CD4-positive, alpha-beta memory T cell (primary cell): ENCODE measurements at regions of chr14 and their contacts with region 1.

Region 1: GRCh38 chr14:66495218-66496098 is 9.3 kb downstream of the CCDC196 start:
- DNase-seq: peak; percentile 31 to 41 (median 39)
- H3K4me3 ChIP-seq: no peak overlapping the region
- H3K4me3 Mint-ChIP-seq: peak overlapping the region in 1 of 8 donors; percentile 12
- H3K27ac ChIP-seq: no peak overlapping the region
- H3K27ac Mint-ChIP-seq: no peak overlapping the region
- H3K4me1 ChIP-seq: peaks cover 3% of the 10 kb centered on the region
- H3K4me1 Mint-ChIP-seq: peaks cover 0 to 11% (median 9%) of the 10 kb centered on the region in 4 donors
- H3K27me3 ChIP-seq: no peaks in the 10 kb centered on the region
- H3K27me3 Mint-ChIP-seq: no peaks in the 10 kb centered on the region

Region 2: DNA sequence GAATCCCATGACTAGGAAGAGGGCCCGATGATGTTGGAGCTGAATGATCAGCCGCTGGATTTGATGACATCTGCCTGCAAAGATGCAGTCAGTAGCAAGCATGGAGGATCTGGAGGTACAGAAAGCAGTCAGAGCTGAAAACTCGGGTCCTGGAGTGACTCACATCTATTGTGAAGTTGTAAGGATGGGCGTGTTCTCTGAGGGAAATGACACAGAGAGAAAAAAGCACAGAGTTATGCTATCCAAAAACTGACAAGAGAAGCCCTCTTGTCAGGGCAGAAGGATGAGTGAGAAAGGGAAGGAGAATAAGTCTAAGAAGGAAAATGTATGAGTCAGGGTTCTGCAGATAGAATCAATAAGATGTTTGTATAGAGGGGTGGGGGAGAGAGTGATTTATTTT is 389.6 kb before region 1 on chr14:
- CTCF ChIA-PET with region 1: no interaction called
- POLR2A ChIA-PET with region 1: no interaction called
- intact Hi-C with region 1: no loop called
- DNase-seq: no peak
- H3K4me3 ChIP-seq: no peak overlapping the region
- H3K4me3 Mint-ChIP-seq: no peak overlapping the region
- H3K27ac ChIP-seq: no peak overlapping the region
- H3K27ac Mint-ChIP-seq: peak overlapping the region in 2 of 7 donors; percentile 4 to 10
- H3K4me1 ChIP-seq: no peaks in the 10 kb centered on the region
- H3K4me1 Mint-ChIP-seq: peaks cover 0 to 4% (median under 1%) of the 10 kb centered on the region in 4 donors
- H3K27me3 ChIP-seq: no peaks in the 10 kb centered on the region
- H3K27me3 Mint-ChIP-seq: peaks cover 0 to 1% of the 10 kb centered on the region in 2 donors

Region 3: DNA sequence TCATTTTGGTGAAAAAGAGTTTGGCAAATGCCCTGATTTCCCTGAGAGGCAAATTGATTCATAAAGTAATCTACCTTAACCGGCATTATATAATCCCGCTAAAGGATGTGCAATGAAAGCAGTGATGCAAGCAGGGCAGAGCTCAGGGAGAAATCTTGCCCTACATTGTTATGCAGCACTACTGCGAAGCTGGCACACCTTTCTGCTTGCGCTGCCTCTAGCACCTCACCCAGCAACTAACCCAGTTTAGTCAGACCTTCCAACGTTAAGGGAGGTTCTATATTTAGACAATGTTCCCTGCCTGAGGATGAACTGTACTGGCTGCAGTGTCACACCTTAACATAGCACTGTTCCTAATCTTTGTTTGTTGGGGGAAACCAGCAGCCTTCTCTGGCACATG is 70.1 kb before region 1 on chr14:
- CTCF ChIA-PET with region 1: no interaction called
- POLR2A ChIA-PET with region 1: no interaction called
- intact Hi-C with region 1: no loop called
- DNase-seq: no peak
- H3K4me3 ChIP-seq: no peak overlapping the region
- H3K4me3 Mint-ChIP-seq: no peak overlapping the region
- H3K27ac ChIP-seq: no peak overlapping the region
- H3K27ac Mint-ChIP-seq: no peak overlapping the region
- H3K4me1 ChIP-seq: no peaks in the 10 kb centered on the region
- H3K4me1 Mint-ChIP-seq: no peaks in the 10 kb centered on the region
- H3K27me3 ChIP-seq: no peaks in the 10 kb centered on the region
- H3K27me3 Mint-ChIP-seq: no peaks in the 10 kb centered on the region

Region 4: GRCh38 chr14:66507722-66508546 is 12.5 kb after region 1 on chr14 and contains the start of gene GPHN:
- CTCF ChIA-PET with region 1: interaction called, 14 read pairs
- POLR2A ChIA-PET with region 1: interaction called, 10 read pairs
- intact Hi-C with region 1: no loop called
- DNase-seq: peak; percentile 85 to 92 (median 89)
- H3K4me3 ChIP-seq: peak within 1 kb of the TSS; percentile 48 to 79
- H3K4me3 Mint-ChIP-seq: peak within 1 kb of the TSS; percentile 98 to 100 (median 99)
- H3K27ac ChIP-seq: peak within 1 kb of the TSS; percentile 73
- H3K27ac Mint-ChIP-seq: peak within 1 kb of the TSS; percentile 92 to 98 (median 95)
- H3K4me1 ChIP-seq: peaks cover 40% of the 10 kb centered on the region
- H3K4me1 Mint-ChIP-seq: peaks cover 18 to 53% (median 32%) of the 10 kb centered on the region in 4 donors
- H3K27me3 ChIP-seq: no peaks in the 10 kb centered on the region
- H3K27me3 Mint-ChIP-seq: no peaks in the 10 kb centered on the region
- total RNA-seq, gene GPHN: 15.5 to 18.8 TPM

Region 5: DNA sequence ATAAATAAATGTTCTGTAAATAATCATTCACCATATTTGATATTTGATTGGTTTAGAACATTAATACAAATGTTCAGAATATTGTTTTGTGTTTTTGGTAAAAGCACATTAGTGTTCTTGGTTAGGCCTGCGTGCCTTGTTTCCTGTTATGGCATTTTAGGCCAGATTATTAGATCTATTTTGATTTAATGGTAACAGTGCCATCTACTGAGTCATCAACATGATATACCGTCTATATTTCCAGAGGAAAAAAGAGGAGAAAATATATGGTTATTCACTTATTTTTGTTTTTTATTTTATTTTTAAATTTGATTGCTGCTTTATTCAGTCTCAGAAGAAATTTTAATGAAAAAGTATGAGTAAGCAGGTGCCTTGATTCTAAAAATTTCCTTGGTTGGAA is 72.8 kb after region 1 on chr14:
- CTCF ChIA-PET with region 1: no interaction called
- POLR2A ChIA-PET with region 1: no interaction called
- intact Hi-C with region 1: loop called (anchors 1 kb)
- DNase-seq: no peak
- H3K4me3 ChIP-seq: no peak overlapping the region
- H3K4me3 Mint-ChIP-seq: no peak overlapping the region
- H3K27ac ChIP-seq: no peak overlapping the region
- H3K27ac Mint-ChIP-seq: no peak overlapping the region
- H3K4me1 ChIP-seq: no peaks in the 10 kb centered on the region
- H3K4me1 Mint-ChIP-seq: peaks cover 0 to 35% (median 12%) of the 10 kb centered on the region in 4 donors
- H3K27me3 ChIP-seq: no peaks in the 10 kb centered on the region
- H3K27me3 Mint-ChIP-seq: no peaks in the 10 kb centered on the region

Region 6: DNA sequence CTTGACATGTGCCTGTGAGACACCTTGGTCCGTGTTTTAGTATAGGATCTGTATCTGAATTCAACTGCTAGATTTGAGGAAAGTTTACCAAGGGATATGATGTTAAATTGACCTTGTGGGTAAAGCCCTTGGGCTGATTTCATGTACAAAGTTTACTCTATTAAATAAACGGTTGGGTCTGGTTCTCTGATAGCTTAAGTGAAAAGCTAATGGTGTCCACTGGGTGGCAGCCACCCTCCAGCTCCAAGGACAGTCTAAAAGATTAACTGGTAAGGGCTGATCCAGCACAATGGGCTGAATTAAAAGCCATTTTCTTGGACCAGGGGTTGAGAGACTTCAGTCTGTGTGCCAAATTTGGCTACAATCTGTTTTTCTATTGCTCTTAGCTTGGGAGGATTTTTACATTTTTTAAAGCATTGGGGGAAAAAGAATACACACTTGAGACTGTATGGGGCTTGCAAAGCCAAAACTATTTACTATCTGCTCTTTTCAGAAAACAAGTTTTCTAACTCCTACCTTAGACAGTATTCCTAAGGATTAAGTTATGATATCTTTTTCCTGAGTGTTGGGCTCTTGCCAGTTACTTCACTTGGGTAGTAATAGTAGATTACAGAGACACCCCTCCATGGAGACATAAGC is 129.0 kb after region 1 on chr14:
- CTCF ChIA-PET with region 1: interaction called, 6 read pairs
- POLR2A ChIA-PET with region 1: no interaction called
- intact Hi-C with region 1: loop called (anchors 5 kb)
- DNase-seq: peak in 4 of 5 donors; percentile 8 to 14 (median 12)
- H3K4me3 ChIP-seq: no peak overlapping the region
- H3K4me3 Mint-ChIP-seq: no peak overlapping the region
- H3K27ac ChIP-seq: no peak overlapping the region
- H3K27ac Mint-ChIP-seq: no peak overlapping the region
- H3K4me1 ChIP-seq: no peaks in the 10 kb centered on the region
- H3K4me1 Mint-ChIP-seq: peaks cover 10 to 16% (median 13%) of the 10 kb centered on the region in 4 donors
- H3K27me3 ChIP-seq: no peaks in the 10 kb centered on the region
- H3K27me3 Mint-ChIP-seq: no peaks in the 10 kb centered on the region

Region 7: DNA sequence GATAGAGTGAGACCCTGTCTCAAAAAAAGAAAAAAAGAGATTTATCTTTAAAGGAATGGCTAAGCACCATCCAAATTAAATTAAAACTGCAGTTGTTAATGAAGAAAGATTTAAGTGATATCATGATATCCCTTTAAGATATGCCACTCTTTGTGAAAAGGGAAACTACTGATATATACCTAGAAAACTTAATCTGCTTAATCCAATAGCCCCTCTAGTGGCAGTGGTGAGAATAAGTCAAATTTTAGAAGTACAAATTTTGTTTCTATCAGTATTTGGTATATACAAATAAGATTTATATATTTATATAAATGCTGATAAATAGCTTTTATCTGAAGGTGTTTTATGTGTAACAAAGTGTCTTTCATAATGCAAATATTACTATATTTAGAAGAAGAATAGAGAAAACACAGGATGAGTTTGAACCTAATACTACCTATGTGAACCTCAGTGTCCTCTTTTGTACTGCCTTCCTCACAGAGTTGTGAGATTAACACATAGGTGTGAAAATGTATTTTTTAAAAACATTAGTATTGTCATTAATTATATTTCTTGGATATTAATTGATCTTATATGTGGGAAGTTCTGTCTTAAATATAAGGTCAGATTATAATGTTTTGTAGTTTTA is 642.4 kb after region 1 on chr14:
- CTCF ChIA-PET with region 1: interaction called, 3 read pairs
- POLR2A ChIA-PET with region 1: no interaction called
- intact Hi-C with region 1: loop called (anchors 1 kb)
- DNase-seq: no peak
- H3K4me3 ChIP-seq: no peak overlapping the region
- H3K4me3 Mint-ChIP-seq: no peak overlapping the region
- H3K27ac ChIP-seq: no peak overlapping the region
- H3K27ac Mint-ChIP-seq: no peak overlapping the region
- H3K4me1 ChIP-seq: no peaks in the 10 kb centered on the region
- H3K4me1 Mint-ChIP-seq: peaks cover 0 to 5% (median 2%) of the 10 kb centered on the region in 4 donors
- H3K27me3 ChIP-seq: no peaks in the 10 kb centered on the region
- H3K27me3 Mint-ChIP-seq: no peaks in the 10 kb centered on the region